MCF 10A (cell line): ENCODE measurements at regions of chr1 and their contacts with region 1.

Region 1: GRCh38 chr1:147627435-147628110 is 42.8 kb downstream of the ACP6 start:
- DNase-seq: peak; percentile 65
- H3K4me3 Mint-ChIP-seq: no peak overlapping the region
- H3K27ac Mint-ChIP-seq: no peak overlapping the region
- H3K4me1 Mint-ChIP-seq: no peaks in the 10 kb centered on the region
- H3K27me3 Mint-ChIP-seq: no peaks in the 10 kb centered on the region
- CTCF ChIP-seq: peak; percentile 95

Region 2: GRCh38 chr1:147273409-147274336 is 353.9 kb before region 1 on chr1:
- CTCF ChIA-PET with region 1: interaction called, 3 read pairs
- POLR2A ChIA-PET with region 1: no interaction called
- intact Hi-C with region 1: loop called (anchors 1 kb)
- DNase-seq: peak; percentile 92
- H3K4me3 Mint-ChIP-seq: peak overlapping the region; percentile 55
- H3K27ac Mint-ChIP-seq: peak overlapping the region; percentile 93
- H3K4me1 Mint-ChIP-seq: peaks cover 14% of the 10 kb centered on the region
- H3K27me3 Mint-ChIP-seq: no peaks in the 10 kb centered on the region
- CTCF ChIP-seq: peak; percentile 37

Region 3: GRCh38 chr1:147515046-147515869 is 112.3 kb before region 1 on chr1:
- CTCF ChIA-PET with region 1: interaction called, 22 read pairs
- POLR2A ChIA-PET with region 1: no interaction called
- intact Hi-C with region 1: loop called (anchors 1 kb)
- DNase-seq: peak; percentile 84
- H3K4me3 Mint-ChIP-seq: no peak overlapping the region
- H3K27ac Mint-ChIP-seq: no peak overlapping the region
- H3K4me1 Mint-ChIP-seq: peaks cover 7% of the 10 kb centered on the region
- H3K27me3 Mint-ChIP-seq: no peaks in the 10 kb centered on the region
- CTCF ChIP-seq: peak; percentile 27

Region 4: DNA sequence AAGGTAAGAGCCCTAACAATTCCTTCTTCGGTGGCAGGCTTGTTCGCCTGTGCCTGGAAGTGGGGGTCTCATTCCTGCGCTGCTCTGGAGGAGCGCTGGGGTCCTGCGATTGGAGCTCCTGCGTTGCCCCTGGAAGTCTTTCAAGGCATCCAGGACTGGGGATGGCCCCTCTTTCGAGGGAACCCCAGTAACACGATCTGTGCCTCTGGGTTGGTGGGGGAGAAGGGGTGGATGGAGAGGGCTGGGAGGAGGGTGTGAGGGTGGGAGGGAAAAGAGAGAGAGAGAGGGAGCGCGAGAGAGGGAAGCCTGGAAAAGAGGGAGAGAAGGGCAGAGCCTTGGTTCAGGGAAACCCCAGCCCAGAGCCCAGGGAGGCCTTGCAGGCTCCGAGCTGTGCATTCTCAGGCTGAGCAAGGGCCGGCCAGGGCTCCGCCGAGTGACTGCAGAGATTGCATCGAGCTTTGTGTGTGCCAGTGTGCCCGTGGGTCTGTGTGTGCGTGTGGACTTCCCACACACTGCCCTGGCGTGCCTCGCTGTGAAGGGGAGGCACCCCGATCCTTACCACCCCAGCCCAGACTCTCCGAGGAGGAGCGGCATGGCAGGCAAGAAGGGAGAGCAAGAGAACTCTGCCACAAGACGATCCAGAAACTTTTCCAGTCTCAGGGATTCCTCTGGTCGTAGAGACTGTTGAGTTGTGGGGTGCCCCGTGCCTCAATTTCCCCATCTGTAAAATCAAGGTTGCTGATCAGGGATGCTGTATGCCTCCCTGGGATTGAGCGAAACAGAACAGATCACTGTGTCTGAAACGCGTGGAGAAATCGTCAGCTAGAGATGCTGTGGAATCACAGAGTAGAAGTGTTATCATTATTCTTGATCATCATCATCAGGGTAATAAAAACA is 85.7 kb before region 1 on chr1:
- CTCF ChIA-PET with region 1: interaction called, 11 read pairs
- POLR2A ChIA-PET with region 1: no interaction called
- intact Hi-C with region 1: no loop called
- DNase-seq: no peak
- H3K4me3 Mint-ChIP-seq: no peak overlapping the region
- H3K27ac Mint-ChIP-seq: no peak overlapping the region
- H3K4me1 Mint-ChIP-seq: peaks cover 22% of the 10 kb centered on the region
- H3K27me3 Mint-ChIP-seq: peaks cover 17% of the 10 kb centered on the region
- CTCF ChIP-seq: no peak

Region 5: DNA sequence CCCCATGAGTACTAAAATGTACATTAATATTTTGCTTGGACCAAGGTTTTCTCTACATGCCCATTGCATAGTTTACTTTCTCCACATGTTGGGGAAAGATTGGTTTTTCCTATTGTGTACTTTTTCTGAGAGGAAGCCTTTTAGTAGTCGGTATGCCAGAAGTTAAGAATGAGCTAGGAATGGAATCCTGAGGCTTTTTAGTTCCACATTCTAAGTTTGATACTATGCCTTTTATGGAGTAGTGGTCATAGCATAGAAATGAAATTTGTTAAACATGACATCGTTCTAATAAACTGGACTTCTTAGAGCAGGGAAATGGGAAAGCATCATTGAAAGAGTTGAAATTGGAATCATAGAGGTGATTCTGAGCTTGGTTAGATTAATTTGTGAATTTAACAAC is 22.0 kb before region 1 on chr1:
- CTCF ChIA-PET with region 1: interaction called, 11 read pairs
- POLR2A ChIA-PET with region 1: interaction called, 3 read pairs
- intact Hi-C with region 1: no loop called
- DNase-seq: no peak
- H3K4me3 Mint-ChIP-seq: no peak overlapping the region
- H3K27ac Mint-ChIP-seq: no peak overlapping the region
- H3K4me1 Mint-ChIP-seq: peaks cover 10% of the 10 kb centered on the region
- H3K27me3 Mint-ChIP-seq: no peaks in the 10 kb centered on the region
- CTCF ChIP-seq: no peak

Region 6: DNA sequence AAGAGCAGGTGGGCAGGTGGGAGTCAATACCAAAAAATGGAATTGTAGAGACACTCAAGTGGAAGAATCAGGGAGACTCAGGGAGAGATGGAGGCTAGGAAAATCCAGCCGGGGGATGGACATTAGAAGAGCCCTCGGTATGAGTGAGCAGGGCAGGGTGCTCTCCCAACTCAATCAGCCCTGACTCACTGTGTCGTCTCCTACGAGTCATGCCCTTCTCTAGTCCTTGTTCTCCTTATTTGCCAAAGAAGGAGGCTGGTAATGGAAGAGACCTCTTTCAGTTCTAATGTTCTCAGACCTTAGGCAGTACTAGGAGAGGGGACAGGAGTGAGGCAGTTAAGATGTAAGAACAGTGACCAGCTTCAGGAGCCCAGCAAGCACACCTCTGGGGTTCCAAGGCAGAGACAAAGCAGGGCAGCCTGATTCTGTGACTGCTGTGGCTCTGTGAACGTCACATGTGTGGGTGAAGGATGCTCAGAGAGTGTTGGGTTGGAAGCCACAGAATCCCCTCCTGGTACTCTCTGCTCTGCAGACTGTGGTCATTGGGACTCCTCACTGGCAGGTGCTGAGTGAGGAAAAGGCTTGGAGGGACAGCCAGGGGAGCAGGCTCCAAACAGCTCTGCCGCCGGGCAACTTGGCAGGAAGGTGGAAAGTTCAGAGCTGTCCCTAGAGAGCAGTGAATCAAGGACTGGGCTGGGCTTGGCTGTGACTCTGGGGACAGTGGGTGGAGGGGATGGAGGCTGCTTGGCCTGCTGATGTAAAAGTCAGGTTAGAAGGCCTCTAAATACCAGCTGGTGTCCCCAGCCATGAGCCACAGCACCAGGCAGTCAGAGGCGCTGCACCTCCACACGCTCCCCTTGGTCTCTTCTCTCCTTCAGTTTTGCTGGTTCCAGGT is 143.9 kb after region 1 on chr1:
- CTCF ChIA-PET with region 1: no interaction called
- POLR2A ChIA-PET with region 1: no interaction called
- intact Hi-C with region 1: no loop called
- DNase-seq: no peak
- H3K4me3 Mint-ChIP-seq: no peak overlapping the region
- H3K27ac Mint-ChIP-seq: no peak overlapping the region
- H3K4me1 Mint-ChIP-seq: peaks cover 5% of the 10 kb centered on the region
- H3K27me3 Mint-ChIP-seq: no peaks in the 10 kb centered on the region
- CTCF ChIP-seq: no peak